ENCODE measurements at regions of chr7 and their contacts with region 1.

Region 1: DNA sequence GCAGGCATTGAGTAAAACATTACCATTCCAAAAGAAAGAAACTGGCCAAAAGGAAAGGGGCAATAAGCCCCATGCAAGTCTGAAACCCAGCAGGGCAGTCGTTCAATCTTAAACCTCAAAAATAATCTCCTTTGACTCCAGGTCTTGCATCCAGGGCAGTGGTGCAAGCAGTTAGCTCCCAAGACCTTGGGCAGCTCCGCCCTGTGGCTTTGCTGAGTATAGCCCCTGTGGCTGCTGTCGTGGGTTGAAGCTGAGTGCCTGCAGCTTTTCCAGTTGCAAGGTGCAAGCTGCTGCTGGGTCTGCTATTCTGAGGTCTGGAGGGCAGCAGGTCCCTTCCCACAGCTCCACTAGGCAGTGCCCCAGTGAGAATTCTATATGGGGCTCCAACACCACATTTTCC is 580.1 kb upstream of the AUTS2 start:
- DNase-seq: no peak
- H3K4me3 ChIP-seq: no peak overlapping the region
- H3K27ac ChIP-seq: no peak overlapping the region
- H3K4me1 ChIP-seq: no peaks in the 10 kb centered on the region
- H3K27me3 ChIP-seq: no peaks in the 10 kb centered on the region
- CTCF ChIP-seq: no peak
- EP300 ChIP-seq: no peak
- POLR2A ChIP-seq: no peak

Region 2: DNA sequence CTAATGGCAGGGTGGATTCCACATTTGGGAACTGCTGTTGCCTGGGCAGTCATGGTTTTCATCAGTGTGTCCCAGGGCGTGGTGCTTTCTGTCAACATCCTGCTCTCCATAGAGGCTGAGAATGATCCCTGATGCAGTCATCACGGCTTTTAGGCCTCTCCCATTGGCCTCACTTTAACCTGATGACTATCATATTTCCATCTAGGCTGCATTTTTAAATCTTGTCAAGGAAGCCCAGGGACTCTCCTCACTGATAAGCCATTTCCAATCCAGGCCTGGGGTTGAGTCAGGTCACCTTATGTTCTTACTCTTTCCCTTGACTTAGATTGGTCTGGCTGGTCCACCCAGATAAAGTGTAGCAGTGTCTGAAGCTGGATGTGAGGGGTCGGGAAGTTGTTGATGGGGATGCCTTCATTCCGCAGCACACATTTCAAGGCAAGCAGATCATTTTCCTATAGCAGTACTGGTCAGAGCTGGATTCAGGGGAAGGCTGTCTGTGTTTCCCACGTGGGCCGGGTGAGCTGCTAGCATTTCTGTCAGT is 757.1 kb after region 1 on chr7:
- in situ Hi-C with region 1: no loop called
- intact Hi-C with region 1: loop called (anchors 5 kb)
- DNase-seq: no peak
- H3K4me3 ChIP-seq: no peak overlapping the region
- H3K27ac ChIP-seq: no peak overlapping the region
- H3K4me1 ChIP-seq: peaks cover 0 to 7% (median 0%) of the 10 kb centered on the region in 4 donors
- H3K27me3 ChIP-seq: no peaks in the 10 kb centered on the region
- CTCF ChIP-seq: no peak
- EP300 ChIP-seq: no peak
- POLR2A ChIP-seq: no peak

Measured in transverse colon (tissue), 4 donors.